Natural killer cell (primary cell): ENCODE measurements at regions of chr2 and their contacts with region 1.

Region 1: DNA sequence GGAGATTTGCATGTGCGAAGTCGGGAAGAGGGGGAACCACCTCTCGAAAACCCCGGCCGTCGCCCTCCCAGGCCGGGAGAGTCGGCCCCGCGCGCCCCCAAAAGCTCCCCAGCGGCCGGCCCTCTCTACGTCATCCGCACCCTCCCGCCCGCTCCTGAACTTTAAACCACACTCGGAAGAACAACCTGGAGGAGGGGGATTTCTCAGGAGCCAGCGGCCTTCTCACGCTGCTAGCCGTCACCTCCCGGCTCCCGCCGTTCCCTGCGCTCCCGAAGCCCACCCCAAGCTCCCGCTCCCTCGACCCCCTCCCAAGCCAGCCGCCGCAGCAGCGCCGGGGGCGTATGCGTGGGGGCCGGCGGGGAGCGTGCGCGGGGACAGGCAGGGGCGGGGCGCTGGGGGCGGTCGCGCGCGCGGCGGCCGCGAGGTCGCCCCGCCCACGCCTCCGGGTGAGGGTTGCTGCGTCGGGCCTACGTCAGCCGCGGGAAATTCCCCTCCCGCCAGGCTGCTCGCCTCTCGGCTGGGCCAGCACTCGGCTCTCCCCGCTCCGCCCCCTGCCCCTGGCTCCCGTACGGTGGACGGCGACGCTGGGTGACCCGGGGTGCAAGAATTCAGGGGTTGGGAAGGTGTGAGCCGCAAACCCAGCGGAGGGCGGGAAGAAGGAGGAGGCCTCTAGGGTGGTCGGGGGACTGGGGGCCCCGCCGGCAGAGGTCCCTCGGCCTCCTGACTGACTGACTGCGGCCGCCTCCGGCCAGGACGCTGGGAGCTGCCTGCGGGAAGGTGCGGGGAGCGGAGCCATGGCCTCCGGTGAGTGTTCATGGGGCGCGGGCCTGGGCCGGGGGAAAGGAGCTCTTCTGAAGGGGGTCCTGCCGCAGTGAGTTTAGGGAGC is at the start of gene REL:
- DNase-seq: peak; percentile 92 to 98
- ATAC-seq: peak; percentile 81 to 93 (median 85)
- H3K4me3 ChIP-seq: peak within 1 kb of the TSS; percentile 99
- H3K4me3 Mint-ChIP-seq: peak within 1 kb of the TSS; percentile 97
- H3K27ac ChIP-seq: peak within 1 kb of the TSS; percentile 100
- H3K27ac Mint-ChIP-seq: peak within 1 kb of the TSS; percentile 96 to 99
- H3K4me1 ChIP-seq: peaks cover 6% of the 10 kb centered on the region
- H3K4me1 Mint-ChIP-seq: peaks cover 43 to 45% of the 10 kb centered on the region in 2 donors
- H3K27me3 ChIP-seq: no peaks in the 10 kb centered on the region
- H3K27me3 Mint-ChIP-seq: no peaks in the 10 kb centered on the region
- CTCF ChIP-seq: no peak
- total RNA-seq, gene REL: 128 to 197 (median 178) TPM

Region 2: GRCh38 chr2:60794277-60794863 is 86.9 kb before region 1 on chr2:
- intact Hi-C with region 1: loop called (anchors 5 kb)
- DNase-seq: peak in 1 of 2 donors; percentile 62
- ATAC-seq: peak in 2 of 3 donors; percentile 58 to 65
- H3K4me3 ChIP-seq: no peak overlapping the region
- H3K4me3 Mint-ChIP-seq: no peak overlapping the region
- H3K27ac ChIP-seq: no peak overlapping the region
- H3K27ac Mint-ChIP-seq: peak overlapping the region in 1 of 2 donors; percentile 56
- H3K4me1 ChIP-seq: peaks cover 6% of the 10 kb centered on the region
- H3K4me1 Mint-ChIP-seq: peaks cover 16 to 20% of the 10 kb centered on the region in 2 donors
- H3K27me3 ChIP-seq: no peaks in the 10 kb centered on the region
- H3K27me3 Mint-ChIP-seq: no peaks in the 10 kb centered on the region
- CTCF ChIP-seq: peak; percentile 86

Region 3: GRCh38 chr2:60818272-60818671 is 63.0 kb before region 1 on chr2:
- intact Hi-C with region 1: loop called (anchors 1 kb)
- DNase-seq: peak in 1 of 2 donors; percentile 60
- ATAC-seq: peak in 1 of 3 donors; percentile 29
- H3K4me3 ChIP-seq: no peak overlapping the region
- H3K4me3 Mint-ChIP-seq: peak overlapping the region; percentile 81
- H3K27ac ChIP-seq: peak overlapping the region; percentile 73
- H3K27ac Mint-ChIP-seq: peak overlapping the region; percentile 95 to 98
- H3K4me1 ChIP-seq: peaks cover 36% of the 10 kb centered on the region
- H3K4me1 Mint-ChIP-seq: peaks cover 38 to 49% of the 10 kb centered on the region in 2 donors
- H3K27me3 ChIP-seq: no peaks in the 10 kb centered on the region
- H3K27me3 Mint-ChIP-seq: no peaks in the 10 kb centered on the region
- CTCF ChIP-seq: peak; percentile 22

Region 4: GRCh38 chr2:60954139-60954538 is 72.8 kb after region 1 on chr2:
- intact Hi-C with region 1: loop called (anchors 1 kb)
- DNase-seq: peak; percentile 39 to 70
- ATAC-seq: peak; percentile 96 to 98 (median 98)
- H3K4me3 ChIP-seq: no peak overlapping the region
- H3K4me3 Mint-ChIP-seq: peak overlapping the region; percentile 74
- H3K27ac ChIP-seq: peak overlapping the region; percentile 80
- H3K27ac Mint-ChIP-seq: peak overlapping the region; percentile 83 to 95
- H3K4me1 ChIP-seq: peaks cover 16% of the 10 kb centered on the region
- H3K4me1 Mint-ChIP-seq: peaks cover 33 to 47% of the 10 kb centered on the region in 2 donors
- H3K27me3 ChIP-seq: no peaks in the 10 kb centered on the region
- H3K27me3 Mint-ChIP-seq: no peaks in the 10 kb centered on the region
- CTCF ChIP-seq: no peak

Region 5: DNA sequence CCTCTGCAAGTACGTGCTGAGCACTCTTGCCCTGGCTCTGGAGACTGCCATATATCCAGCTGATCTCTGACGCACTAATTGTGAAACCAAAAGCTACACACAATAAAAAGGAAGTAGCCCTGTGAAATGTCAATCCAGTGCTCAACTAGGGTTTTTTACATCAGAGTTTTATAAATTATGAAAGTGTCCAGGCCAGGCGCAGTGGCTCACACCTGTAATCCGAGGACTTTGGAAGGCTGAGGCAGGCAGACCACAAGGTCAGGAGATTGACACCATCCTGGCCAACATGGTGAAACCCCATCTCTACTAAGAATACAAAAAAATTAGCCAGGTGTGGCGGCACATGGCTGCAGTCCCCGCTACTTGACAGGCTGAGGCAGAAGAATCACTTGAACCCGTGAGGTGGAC is 111.7 kb after region 1 on chr2:
- intact Hi-C with region 1: loop called (anchors 2 kb)
- DNase-seq: peak; percentile 40 to 71
- ATAC-seq: peak; percentile 98 to 100 (median 99)
- H3K4me3 ChIP-seq: peak overlapping the region; percentile 23
- H3K4me3 Mint-ChIP-seq: peak overlapping the region; percentile 82
- H3K27ac ChIP-seq: peak overlapping the region; percentile 87
- H3K27ac Mint-ChIP-seq: peak overlapping the region; percentile 93 to 98
- H3K4me1 ChIP-seq: peaks cover 4% of the 10 kb centered on the region
- H3K4me1 Mint-ChIP-seq: peaks cover 16 to 20% of the 10 kb centered on the region in 2 donors
- H3K27me3 ChIP-seq: no peaks in the 10 kb centered on the region
- H3K27me3 Mint-ChIP-seq: no peaks in the 10 kb centered on the region
- CTCF ChIP-seq: no peak

Region 6: DNA sequence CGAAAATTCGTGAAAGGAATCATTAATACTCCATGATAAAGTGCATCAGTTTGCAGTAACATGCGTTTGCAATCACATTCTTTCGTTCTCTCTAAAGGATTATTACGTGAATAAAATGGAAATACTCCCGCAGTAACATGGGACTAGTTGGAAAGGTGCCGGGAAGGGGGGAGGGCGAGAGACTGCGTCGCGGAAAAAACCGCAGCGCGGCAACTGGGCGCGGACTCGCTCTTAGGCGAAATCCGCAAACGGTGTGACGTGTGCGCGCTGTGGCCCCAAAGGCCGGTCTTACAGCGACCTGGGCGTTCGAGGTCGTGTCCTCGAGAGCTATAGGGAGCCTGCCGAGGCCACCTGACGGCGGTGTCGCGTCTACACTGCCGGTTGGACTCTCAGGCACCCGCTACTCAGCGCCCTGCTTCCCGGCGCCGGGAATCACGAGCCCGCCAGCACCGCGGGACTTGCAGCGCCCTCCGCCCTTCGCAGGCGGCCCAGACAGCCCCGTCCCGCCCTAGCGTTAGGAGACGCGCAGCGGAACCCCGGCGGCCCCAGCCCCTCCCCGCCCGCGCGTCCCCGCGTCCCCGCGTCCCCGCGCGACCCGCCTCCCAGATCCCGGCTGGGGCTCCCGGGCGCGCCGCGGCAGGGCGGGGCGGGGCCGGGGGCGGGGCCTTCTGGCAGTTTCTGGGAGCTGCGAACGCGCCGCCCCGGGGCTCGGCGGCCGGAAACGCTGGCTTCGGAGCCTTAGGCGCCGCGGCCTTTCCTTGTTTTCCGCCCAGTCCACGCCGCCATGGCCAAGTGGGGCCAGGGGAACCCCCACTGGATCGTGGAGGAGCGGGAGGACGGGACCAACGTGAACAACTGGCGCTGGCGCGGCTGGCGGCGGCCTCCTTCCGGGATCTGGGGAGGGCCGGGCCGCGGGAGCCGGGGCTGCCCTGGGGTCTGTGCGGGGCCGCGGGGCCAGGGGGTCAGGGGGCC is 295.8 kb after region 1 on chr2:
- intact Hi-C with region 1: loop called (anchors 2 kb)
- DNase-seq: peak; percentile 80 to 94
- ATAC-seq: peak; percentile 77 to 91 (median 84)
- H3K4me3 ChIP-seq: peak overlapping the region; percentile 97
- H3K4me3 Mint-ChIP-seq: peak overlapping the region; percentile 92
- H3K27ac ChIP-seq: peak overlapping the region; percentile 98
- H3K27ac Mint-ChIP-seq: peak overlapping the region; percentile 79 to 97
- H3K4me1 ChIP-seq: peaks cover 46% of the 10 kb centered on the region
- H3K4me1 Mint-ChIP-seq: peaks cover 46 to 61% of the 10 kb centered on the region in 2 donors
- H3K27me3 ChIP-seq: no peaks in the 10 kb centered on the region
- H3K27me3 Mint-ChIP-seq: no peaks in the 10 kb centered on the region
- CTCF ChIP-seq: no peak